A549 (cell line): ENCODE measurements at regions of chr10 and their contacts with region 1.

Region 1: GRCh38 chr10:132360766-132361447 is 28.9 kb downstream of the LRRC27 start:
- DNase-seq: peak; percentile 29 to 44
- ATAC-seq: peak; percentile 57 to 87; a peak in 4 of 6 replicates
- H3K4me3 ChIP-seq: no peak overlapping the region
- H3K27ac ChIP-seq: no peak overlapping the region
- H3K4me1 ChIP-seq: no peaks in the 10 kb centered on the region
- CTCF ChIP-seq: peak; percentile 51
- EP300 ChIP-seq: no peak
- POLR2A ChIP-seq: no peak
- RAD21 ChIP-seq: peak; percentile 19 to 32; a peak in 2 of 5 replicates

Region 2: DNA sequence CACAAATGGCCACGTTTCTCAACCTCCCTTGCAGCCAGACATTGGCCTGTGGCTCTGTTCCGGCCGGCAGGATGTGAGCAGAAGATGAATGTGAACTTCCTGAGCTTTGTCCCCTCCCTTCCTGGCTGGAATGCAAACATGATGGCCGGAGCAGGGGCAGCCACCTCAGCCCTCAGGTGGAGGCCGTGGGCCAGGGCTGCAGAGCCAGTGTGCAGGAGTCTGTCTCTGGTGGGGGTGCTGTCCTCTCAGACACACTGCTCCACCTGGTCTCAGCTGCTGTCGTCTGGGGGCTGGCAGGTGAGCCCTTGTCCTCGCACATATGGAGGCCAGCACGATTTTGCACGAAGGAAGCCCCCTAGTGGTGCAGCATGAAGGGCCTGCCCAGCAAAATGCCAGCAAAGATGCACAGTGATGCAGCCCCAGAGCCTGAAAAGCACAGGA is 10.8 kb after region 1 on chr10:
- CTCF ChIA-PET with region 1: interaction called, 12 read pairs
- POLR2A ChIA-PET with region 1: no interaction called
- DNase-seq: no peak
- ATAC-seq: peak in 1 of 2 experiments; percentile 81; a peak in 3 of 6 replicates
- H3K4me3 ChIP-seq: no peak overlapping the region
- H3K27ac ChIP-seq: no peak overlapping the region
- H3K4me1 ChIP-seq: no peaks in the 10 kb centered on the region
- CTCF ChIP-seq: peak; percentile 36
- EP300 ChIP-seq: no peak
- POLR2A ChIP-seq: no peak
- RAD21 ChIP-seq: peak; percentile 35 to 51; a peak in 4 of 5 replicates

Region 3: GRCh38 chr10:132477398-132478340 is 116.8 kb after region 1 on chr10:
- CTCF ChIA-PET with region 1: no interaction called
- POLR2A ChIA-PET with region 1: no interaction called
- DNase-seq: no peak
- ATAC-seq: peak in 1 of 2 experiments; percentile 37; a peak in 2 of 6 replicates
- H3K4me3 ChIP-seq: no peak overlapping the region
- H3K27ac ChIP-seq: no peak overlapping the region
- H3K4me1 ChIP-seq: no peaks in the 10 kb centered on the region
- CTCF ChIP-seq: no peak
- EP300 ChIP-seq: no peak
- POLR2A ChIP-seq: no peak
- RAD21 ChIP-seq: no peak